GM12878 (cell line): ENCODE measurements at regions of chrX and their contacts with region 1.

Region 1: DNA sequence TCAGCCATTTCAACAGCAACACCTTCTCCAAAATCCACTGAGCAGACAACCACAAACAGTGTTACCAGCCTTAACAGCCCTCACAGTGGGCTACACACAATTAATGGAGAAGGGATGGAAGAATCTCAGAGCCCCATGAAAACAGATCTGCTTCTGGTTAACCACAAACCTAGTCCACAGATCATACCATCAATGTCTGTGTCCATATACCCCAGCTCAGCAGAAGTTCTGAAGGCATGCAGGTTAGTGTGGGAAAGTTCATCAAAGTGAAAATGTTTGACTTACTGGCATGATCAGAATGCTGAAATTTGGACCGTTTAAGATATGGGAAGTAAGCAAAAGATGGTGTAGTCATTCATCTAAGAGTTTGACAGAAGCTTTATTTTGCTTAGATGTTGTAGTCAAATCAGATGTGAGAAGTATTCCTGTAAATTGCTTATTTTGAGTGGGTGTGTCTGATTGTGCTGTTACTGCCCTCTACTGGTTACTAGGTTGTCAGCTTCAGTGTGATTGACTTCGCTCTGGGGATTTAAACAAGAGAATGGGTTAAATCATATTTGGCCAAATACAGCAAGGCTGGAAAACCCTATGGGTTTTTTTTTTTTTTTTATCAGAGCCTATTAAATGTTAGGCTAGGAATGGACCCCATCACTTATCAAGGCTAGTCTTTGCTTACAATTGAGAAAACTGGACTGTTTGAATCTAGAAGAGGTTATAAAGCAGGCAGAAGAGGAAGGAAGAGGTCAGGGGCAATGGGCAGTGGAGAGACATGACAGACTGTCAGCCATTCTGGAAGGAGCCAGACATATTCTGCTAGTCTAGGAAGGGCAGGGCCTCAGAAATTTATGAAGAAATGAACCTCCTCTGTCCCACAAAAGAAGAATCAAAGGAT is 130.3 kb downstream of the DIPK2B start:
- DNase-seq: peak; percentile 45
- ATAC-seq: peak; percentile 74
- H3K4me3 ChIP-seq: no peak overlapping the region
- H3K27ac ChIP-seq: 0 out of 2 replicates have a peak overlapping the region, but pooled peaks have one; percentile 6
- H3K4me1 ChIP-seq: peaks cover 9% of the 10 kb centered on the region
- H3K27me3 ChIP-seq: no peaks in the 10 kb centered on the region
- CTCF ChIP-seq: peak; percentile 66 to 74 (median 74)
- EP300 ChIP-seq: no peak
- POLR2A ChIP-seq: no peak
- RAD21 ChIP-seq: peak; percentile 83

Region 2: DNA sequence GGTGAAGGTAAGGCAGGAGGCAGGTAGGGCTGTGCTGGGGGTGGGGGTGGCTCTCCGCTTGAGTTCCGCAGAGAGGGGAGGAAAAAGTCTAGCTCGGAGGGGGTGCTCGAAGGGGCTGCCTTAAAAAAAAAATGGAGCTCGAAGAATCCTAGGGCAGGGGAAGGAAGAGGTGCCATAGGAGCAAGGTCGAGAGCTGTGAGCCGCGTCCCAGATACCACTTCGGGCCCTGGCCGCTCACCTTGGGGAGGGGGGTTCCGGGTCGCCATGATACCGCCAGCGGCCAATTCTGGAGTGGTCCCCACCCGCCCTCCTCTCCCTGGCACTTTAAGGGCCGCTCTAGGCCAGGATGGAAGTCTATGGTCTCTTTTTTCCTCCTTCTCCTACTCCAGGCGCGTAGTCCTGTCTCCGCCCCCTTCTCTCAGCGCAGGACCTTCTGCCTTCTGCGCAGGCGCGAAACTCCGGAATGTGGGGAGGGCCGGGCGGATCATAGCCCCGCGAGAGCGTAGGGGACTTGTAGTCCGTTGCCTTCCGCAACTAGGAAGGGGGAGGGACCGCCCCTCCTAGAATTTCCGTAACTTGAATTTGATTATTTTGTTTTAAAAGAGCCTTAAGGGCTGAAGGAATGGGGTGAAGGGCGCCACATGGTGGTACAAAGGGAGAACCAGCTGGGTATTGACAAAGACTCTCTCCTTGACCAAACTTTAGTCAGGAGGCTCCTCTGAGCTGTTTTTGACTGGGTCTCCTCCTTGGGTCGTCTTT is 527.6 kb before region 1 on chrX and contains the start of gene FUNDC1:
- CTCF ChIA-PET with region 1: interaction called, 3 read pairs
- POLR2A ChIA-PET with region 1: no interaction called
- RAD21 ChIA-PET with region 1: no interaction called
- SMC1A ChIA-PET with region 1: no interaction called
- in situ Hi-C with region 1: no loop called
- intact Hi-C with region 1: loop called (anchors 10 kb)
- DNase-seq: peak; percentile 79
- ATAC-seq: peak; percentile 97
- H3K4me3 ChIP-seq: peak within 1 kb of the TSS; percentile 73
- H3K27ac ChIP-seq: peak within 1 kb of the TSS; percentile 72
- H3K4me1 ChIP-seq: no peaks in the 10 kb centered on the region
- H3K27me3 ChIP-seq: no peaks in the 10 kb centered on the region
- CTCF ChIP-seq: peak; percentile 15 to 28 (median 26); a peak in 3 of 6 replicates
- EP300 ChIP-seq: no peak
- POLR2A ChIP-seq: peak; percentile 63
- RAD21 ChIP-seq: peak; percentile 30; the same call in 1 of the 2 replicates
- polyA plus RNA-seq, gene FUNDC1: 22.7 to 25.1 TPM

Region 3: GRCh38 chrX:44898411-44899221 is 171.7 kb before region 1 on chrX:
- CTCF ChIA-PET with region 1: interaction called, 8 read pairs
- POLR2A ChIA-PET with region 1: no interaction called
- RAD21 ChIA-PET with region 1: interaction called, 8 read pairs
- SMC1A ChIA-PET with region 1: interaction called, 6 read pairs
- in situ Hi-C with region 1: loop called (anchors 25 kb)
- intact Hi-C with region 1: loop called (anchors 10 kb)
- DNase-seq: no peak
- ATAC-seq: peak; percentile 74
- H3K4me3 ChIP-seq: no peak overlapping the region; the same call in 1 of the 2 replicates
- H3K27ac ChIP-seq: peak overlapping the region; percentile 70
- H3K4me1 ChIP-seq: peaks cover 16% of the 10 kb centered on the region
- H3K27me3 ChIP-seq: no peaks in the 10 kb centered on the region
- CTCF ChIP-seq: no peak
- EP300 ChIP-seq: no peak
- POLR2A ChIP-seq: no peak
- RAD21 ChIP-seq: no peak

Region 4: DNA sequence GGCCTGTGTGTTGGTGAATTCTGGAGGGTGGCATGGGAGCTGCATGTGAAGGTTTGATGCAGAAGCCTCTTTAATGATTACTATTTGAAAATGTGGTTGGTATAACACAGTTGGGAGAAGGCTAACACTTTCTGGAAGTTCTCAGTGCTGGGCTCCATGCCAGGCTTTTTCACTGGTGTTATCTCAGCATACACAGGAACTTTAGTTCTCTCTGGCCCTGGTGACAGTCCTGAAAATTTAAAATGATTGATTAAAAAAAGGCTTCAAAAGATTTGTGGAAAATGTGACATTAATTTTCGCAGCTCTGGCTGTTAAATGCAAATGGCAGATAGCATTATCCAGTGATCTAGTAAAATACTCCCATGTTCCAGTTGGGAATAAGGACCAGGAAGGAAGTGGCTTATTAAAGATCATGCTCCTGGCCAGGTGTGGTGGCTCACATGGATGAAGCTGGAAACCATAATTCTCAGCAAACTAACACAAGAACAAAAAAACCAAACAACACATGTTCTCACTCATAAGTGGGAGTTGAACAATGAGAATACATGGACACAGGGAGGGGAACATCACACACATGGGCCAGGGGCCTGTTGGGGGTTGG is 93.8 kb after region 1 on chrX:
- CTCF ChIA-PET with region 1: no interaction called
- POLR2A ChIA-PET with region 1: no interaction called
- RAD21 ChIA-PET with region 1: no interaction called
- SMC1A ChIA-PET with region 1: no interaction called
- in situ Hi-C with region 1: no loop called
- intact Hi-C with region 1: no loop called
- DNase-seq: no peak
- ATAC-seq: no peak
- H3K4me3 ChIP-seq: no peak overlapping the region
- H3K27ac ChIP-seq: no peak overlapping the region
- H3K4me1 ChIP-seq: no peaks in the 10 kb centered on the region
- H3K27me3 ChIP-seq: no peaks in the 10 kb centered on the region; a peak in 1 of 4 replicates
- CTCF ChIP-seq: no peak
- EP300 ChIP-seq: no peak
- POLR2A ChIP-seq: no peak
- RAD21 ChIP-seq: no peak

Region 5: DNA sequence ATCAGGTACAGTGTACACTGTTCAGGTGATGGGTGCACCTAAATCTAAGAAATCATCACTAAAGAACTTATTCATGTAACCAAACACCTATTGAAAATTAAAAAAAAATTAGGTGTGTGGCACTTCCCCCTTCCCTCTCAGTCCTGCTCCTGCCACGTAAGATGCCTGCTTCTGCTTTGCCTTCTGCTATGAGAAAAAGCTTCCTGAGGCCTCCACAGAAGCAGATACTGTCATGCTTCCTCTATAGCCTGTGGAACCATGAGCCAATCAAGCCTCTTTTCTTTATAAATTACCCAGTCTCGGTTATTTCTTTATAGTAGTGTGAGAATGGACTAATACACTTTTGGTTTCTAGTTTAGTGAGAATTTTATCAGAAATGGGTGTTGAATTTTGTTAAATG is 590.1 kb after region 1 on chrX:
- CTCF ChIA-PET with region 1: no interaction called
- POLR2A ChIA-PET with region 1: no interaction called
- RAD21 ChIA-PET with region 1: no interaction called
- SMC1A ChIA-PET with region 1: no interaction called
- in situ Hi-C with region 1: no loop called
- intact Hi-C with region 1: no loop called
- DNase-seq: no peak
- ATAC-seq: no peak
- H3K4me3 ChIP-seq: no peak overlapping the region
- H3K27ac ChIP-seq: no peak overlapping the region
- H3K4me1 ChIP-seq: no peaks in the 10 kb centered on the region
- H3K27me3 ChIP-seq: no peaks in the 10 kb centered on the region
- CTCF ChIP-seq: no peak
- EP300 ChIP-seq: no peak
- POLR2A ChIP-seq: no peak
- RAD21 ChIP-seq: no peak